ENCODE measurements at regions of chr11 and their contacts with region 1.

Region 1: DNA sequence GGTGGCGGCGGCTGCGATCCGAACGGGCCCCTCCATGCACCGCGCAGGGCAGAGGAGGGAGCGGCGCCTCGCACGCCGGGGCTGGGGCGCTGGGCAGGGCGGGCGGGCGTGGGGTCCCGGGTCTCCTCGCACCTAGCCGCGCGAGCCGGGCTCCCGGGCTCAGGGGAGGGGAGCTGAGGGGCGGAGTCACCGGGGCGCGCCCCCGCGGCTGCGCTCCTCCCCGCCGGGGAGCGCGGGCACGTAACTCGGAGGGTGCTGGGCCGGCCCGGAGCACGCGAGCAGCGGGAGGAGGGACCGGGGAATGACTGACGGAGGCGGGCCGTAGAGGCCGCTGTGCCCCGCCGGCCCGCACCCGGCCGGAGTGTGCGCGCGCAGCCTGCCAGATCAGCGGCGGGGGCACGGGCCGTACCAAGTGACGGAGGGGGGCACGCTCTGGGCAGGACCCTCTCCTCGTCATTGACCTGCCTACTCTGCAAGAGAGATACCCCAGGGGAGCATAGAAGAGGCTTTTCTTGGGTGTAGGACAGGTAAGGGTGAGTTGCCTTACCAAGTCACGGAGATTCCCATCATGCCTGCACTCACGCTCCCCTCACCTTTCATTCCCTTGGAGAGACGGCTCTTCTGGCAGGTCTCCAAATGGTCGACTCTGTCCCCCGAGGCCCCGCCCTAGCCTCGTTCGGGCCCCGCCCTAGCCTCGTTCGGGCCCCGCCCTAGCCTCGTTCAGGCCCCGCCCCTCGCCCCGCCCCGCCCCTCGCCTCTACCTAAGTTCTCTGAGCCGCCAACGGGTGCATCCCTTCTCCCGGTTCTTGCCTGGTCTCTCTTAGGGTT is at the start of gene CDON:
- DNase-seq: peak; percentile 88
- H3K4me3 ChIP-seq: peak within 1 kb of the TSS; percentile 13 to 76 (median 41)
- H3K27ac ChIP-seq: peak within 1 kb of the TSS; percentile 73
- H3K4me1 ChIP-seq: peaks cover 7% of the 10 kb centered on the region
- H3K27me3 ChIP-seq: peaks cover 18 to 33% of the 10 kb centered on the region in 2 experiments
- CTCF ChIP-seq: peak in 1 of 2 donors; percentile 19
- POLR2A ChIP-seq: no peak
- total RNA-seq, gene CDON: 3.5 and 3.8 TPM in 2 replicates

Region 2: DNA sequence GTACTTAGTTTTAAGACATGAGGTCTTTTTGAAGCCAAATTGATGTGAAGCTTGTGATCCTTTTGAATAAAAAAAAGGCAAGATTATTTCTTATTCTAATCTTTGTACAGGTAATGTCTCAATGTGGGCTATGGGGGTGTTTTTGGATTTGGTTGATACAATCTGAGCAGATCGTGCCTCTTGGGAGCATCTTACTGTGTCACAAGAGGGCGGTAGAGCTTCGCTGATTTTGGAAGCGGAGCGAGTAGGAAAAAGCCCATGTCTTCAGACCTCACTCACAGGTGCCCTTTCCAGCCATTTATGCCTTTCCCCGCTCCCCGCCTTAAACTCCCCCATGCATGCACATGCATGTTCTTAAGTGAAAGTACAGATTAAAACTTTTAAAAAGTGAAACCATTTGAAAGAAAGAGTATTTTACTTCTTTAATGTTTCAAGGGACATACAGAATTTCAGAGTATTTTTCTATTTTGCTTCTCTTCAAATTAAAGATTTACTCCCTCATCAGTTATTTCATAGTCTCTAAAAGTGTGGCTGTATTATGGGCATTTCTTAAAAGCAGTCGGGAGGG is 139.8 kb before region 1 on chr11:
- CTCF ChIA-PET with region 1: no interaction called
- POLR2A ChIA-PET with region 1: no interaction called
- dilution Hi-C with region 1: no loop called
- intact Hi-C with region 1: loop called (anchors 1 kb)
- DNase-seq: peak; percentile 69
- H3K4me3 ChIP-seq: no peak overlapping the region
- H3K27ac ChIP-seq: no peak overlapping the region
- H3K4me1 ChIP-seq: no peaks in the 10 kb centered on the region
- H3K27me3 ChIP-seq: peaks cover 2 to 7% of the 10 kb centered on the region in 2 experiments
- CTCF ChIP-seq: peak; percentile 73 to 74
- POLR2A ChIP-seq: no peak

Region 3: DNA sequence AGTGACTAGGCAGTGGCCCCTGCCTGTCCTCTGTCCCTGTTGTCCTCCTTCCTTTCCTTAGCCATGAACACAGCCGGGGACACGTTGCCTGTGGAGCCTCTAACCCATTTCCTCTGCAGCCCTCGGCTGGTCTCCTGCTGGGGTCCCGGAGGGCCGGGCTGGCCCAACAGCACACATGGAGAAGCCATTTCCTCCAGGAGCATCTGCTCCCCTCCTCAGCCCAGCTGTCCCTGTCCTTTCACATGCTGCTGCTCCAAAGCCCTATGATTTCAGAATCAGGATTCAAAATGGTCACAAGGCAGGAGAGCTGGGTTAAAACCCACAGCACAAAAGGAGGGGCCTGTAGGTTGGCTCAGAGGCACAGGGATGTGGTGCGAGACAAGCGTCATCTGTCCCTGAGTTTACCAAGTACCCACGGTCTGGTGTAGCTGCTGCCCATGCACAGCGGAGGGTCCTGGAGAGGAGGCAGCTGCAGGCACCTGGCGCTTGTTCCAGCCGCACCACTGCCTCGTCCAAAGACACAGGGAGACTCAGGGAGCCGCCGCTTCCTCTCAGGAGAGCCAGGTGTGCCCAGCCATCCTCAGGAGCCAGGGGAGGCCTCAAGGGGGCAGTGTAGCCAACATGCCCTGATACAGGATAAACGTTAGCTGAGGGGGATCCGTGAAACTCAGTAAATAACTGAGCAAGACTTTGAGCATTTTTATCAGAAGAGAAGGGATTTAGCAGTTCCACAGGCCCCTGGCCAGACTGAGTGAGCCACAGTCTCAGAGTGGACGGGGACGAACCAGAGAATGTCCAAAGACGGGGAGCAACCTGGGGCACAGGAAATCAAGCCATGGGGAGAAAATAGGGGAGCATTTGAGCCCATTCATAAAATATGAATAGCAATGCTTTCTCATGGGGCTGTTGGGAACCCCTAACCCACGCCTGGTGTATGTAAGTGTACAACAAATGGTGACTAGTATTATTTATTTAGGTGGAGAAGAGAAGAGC is 121.0 kb before region 1 on chr11:
- CTCF ChIA-PET with region 1: interaction called, 11 read pairs
- POLR2A ChIA-PET with region 1: no interaction called
- dilution Hi-C with region 1: no loop called
- intact Hi-C with region 1: loop called (anchors 5 kb)
- DNase-seq: peak; percentile 21
- H3K4me3 ChIP-seq: no peak overlapping the region
- H3K27ac ChIP-seq: no peak overlapping the region
- H3K4me1 ChIP-seq: no peaks in the 10 kb centered on the region
- H3K27me3 ChIP-seq: no peaks in the 10 kb centered on the region
- CTCF ChIP-seq: peak; percentile 62 to 80
- POLR2A ChIP-seq: no peak

Region 4: GRCh38 chr11:126132319-126132718 is 69.4 kb after region 1 on chr11:
- CTCF ChIA-PET with region 1: no interaction called
- POLR2A ChIA-PET with region 1: no interaction called
- dilution Hi-C with region 1: no loop called
- intact Hi-C with region 1: no loop called
- DNase-seq: no peak
- H3K4me3 ChIP-seq: no peak overlapping the region
- H3K27ac ChIP-seq: no peak overlapping the region
- H3K4me1 ChIP-seq: no peaks in the 10 kb centered on the region
- H3K27me3 ChIP-seq: peaks cover 2% of the 10 kb centered on the region in 2 experiments
- CTCF ChIP-seq: no peak
- POLR2A ChIP-seq: no peak

Region 5: GRCh38 chr11:126153972-126154371 is 91.1 kb after region 1 on chr11:
- CTCF ChIA-PET with region 1: no interaction called
- POLR2A ChIA-PET with region 1: no interaction called
- dilution Hi-C with region 1: no loop called
- intact Hi-C with region 1: loop called (anchors 2 kb)
- DNase-seq: peak; percentile 98
- H3K4me3 ChIP-seq: no peak overlapping the region
- H3K27ac ChIP-seq: peak overlapping the region; percentile 47
- H3K4me1 ChIP-seq: peaks cover 25% of the 10 kb centered on the region
- H3K27me3 ChIP-seq: no peaks in the 10 kb centered on the region
- CTCF ChIP-seq: no peak
- POLR2A ChIP-seq: peak; percentile 66

Region 6: DNA sequence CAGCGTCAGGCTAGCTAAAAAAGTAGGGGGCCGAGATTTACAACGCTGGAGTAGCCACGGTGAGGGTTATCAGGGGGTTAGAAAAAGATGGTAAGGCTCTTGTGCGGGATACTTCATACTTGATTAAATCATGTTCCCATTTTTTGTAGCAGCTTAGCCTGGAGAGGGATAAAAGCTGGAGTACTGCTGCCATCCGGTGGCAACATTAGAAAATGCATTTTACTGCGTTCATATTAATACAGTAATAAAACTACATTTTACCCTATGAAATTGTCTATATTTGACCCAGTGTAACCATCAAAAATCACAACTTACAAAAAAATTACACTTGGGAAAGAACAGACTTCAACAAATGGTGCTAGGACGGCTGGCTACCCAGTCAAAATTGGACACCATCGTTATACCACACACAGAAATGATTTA is 131.2 kb after region 1 on chr11:
- CTCF ChIA-PET with region 1: interaction called, 9 read pairs
- POLR2A ChIA-PET with region 1: no interaction called
- dilution Hi-C with region 1: no loop called
- intact Hi-C with region 1: loop called (anchors 2 kb)
- DNase-seq: peak; percentile 67
- H3K4me3 ChIP-seq: no peak overlapping the region
- H3K27ac ChIP-seq: no peak overlapping the region
- H3K4me1 ChIP-seq: no peaks in the 10 kb centered on the region
- H3K27me3 ChIP-seq: no peaks in the 10 kb centered on the region
- CTCF ChIP-seq: peak; percentile 35 to 49
- POLR2A ChIP-seq: no peak

Region 7: GRCh38 chr11:126268708-126269579 is 206.1 kb after region 1 on chr11 and contains the starts of genes FOXRED1 and SRPRA:
- CTCF ChIA-PET with region 1: no interaction called
- POLR2A ChIA-PET with region 1: no interaction called
- dilution Hi-C with region 1: no loop called
- intact Hi-C with region 1: loop called (anchors 2 kb)
- DNase-seq: peak; percentile 99
- H3K4me3 ChIP-seq: peak within 1 kb of the TSS; percentile 81 to 92 (median 87)
- H3K27ac ChIP-seq: peak within 1 kb of the TSS; percentile 82
- H3K4me1 ChIP-seq: peaks cover 12% of the 10 kb centered on the region
- H3K27me3 ChIP-seq: no peaks in the 10 kb centered on the region
- CTCF ChIP-seq: no peak
- POLR2A ChIP-seq: peak; percentile 92
- total RNA-seq, gene FOXRED1: 31.0 and 33.5 TPM in 2 replicates
- total RNA-seq, gene SRPRA: 104 and 106 TPM in 2 replicates

Region 8: GRCh38 chr11:126585781-126586491 is 523.0 kb after region 1 on chr11:
- CTCF ChIA-PET with region 1: no interaction called
- POLR2A ChIA-PET with region 1: no interaction called
- dilution Hi-C with region 1: no loop called
- intact Hi-C with region 1: loop called (anchors 5 kb)
- DNase-seq: peak; percentile 99
- H3K4me3 ChIP-seq: peak overlapping the region in 1 of 3 experiments; percentile 28
- H3K27ac ChIP-seq: peak overlapping the region; percentile 82
- H3K4me1 ChIP-seq: peaks cover 11% of the 10 kb centered on the region
- H3K27me3 ChIP-seq: no peaks in the 10 kb centered on the region
- CTCF ChIP-seq: no peak
- POLR2A ChIP-seq: no peak

Measured in endothelial cell of umbilical vein (primary cell).